ENCODE measurements at regions of chr4 and their contacts with region 1.

Region 1: DNA sequence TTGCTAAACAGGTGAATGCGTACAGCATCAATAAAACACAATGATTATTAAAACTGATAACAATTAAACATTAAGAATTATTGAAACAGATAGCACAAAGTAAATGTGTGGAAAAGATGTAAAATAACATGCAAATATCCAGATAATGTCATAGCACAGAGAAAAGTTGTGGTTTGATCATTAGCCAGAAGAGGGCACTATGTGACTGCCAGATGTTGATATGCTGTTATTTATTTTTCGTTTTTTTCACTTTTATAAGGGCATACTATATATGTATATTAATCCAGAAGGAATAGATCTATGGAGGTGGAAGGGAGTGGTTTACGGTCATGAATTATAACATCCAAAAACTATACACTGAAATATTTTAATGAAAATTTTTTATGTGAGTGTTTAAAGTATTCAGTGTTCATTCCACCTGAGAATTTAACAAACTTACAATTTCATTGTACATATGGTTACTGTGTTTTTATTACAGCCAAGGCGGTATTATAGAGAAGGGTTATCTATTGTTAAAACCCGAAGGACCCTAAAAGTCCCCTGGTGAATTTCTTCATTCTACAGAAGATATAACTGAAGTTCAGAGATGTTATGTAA is 211.9 kb upstream of the UGT8 start:
- DNase-seq: no peak
- H3K4me3 ChIP-seq: no peak overlapping the region
- H3K27ac ChIP-seq: no peak overlapping the region
- H3K27me3 ChIP-seq: peaks cover 0 to 4% (median 0%) of the 10 kb centered on the region in 45 donors
- CTCF ChIP-seq: peak; percentile 49 to 97 (median 80)

Region 2: GRCh38 chr4:113394730-113395530 is 991.8 kb before region 1 on chr4:
- intact Hi-C with region 1: loop called (anchors 5 kb)
- DNase-seq: peak in 3 of 10 donors; percentile 34 to 64 (median 61)
- H3K4me3 ChIP-seq: peak overlapping the region in 7 of 59 donors; percentile 2 to 27 (median 7)
- H3K27ac ChIP-seq: peak overlapping the region in 23 of 59 donors; percentile 4 to 67 (median 38)
- H3K27me3 ChIP-seq: no peaks in the 10 kb centered on the region
- CTCF ChIP-seq: peak; percentile 82 to 98 (median 94)

Region 3: DNA sequence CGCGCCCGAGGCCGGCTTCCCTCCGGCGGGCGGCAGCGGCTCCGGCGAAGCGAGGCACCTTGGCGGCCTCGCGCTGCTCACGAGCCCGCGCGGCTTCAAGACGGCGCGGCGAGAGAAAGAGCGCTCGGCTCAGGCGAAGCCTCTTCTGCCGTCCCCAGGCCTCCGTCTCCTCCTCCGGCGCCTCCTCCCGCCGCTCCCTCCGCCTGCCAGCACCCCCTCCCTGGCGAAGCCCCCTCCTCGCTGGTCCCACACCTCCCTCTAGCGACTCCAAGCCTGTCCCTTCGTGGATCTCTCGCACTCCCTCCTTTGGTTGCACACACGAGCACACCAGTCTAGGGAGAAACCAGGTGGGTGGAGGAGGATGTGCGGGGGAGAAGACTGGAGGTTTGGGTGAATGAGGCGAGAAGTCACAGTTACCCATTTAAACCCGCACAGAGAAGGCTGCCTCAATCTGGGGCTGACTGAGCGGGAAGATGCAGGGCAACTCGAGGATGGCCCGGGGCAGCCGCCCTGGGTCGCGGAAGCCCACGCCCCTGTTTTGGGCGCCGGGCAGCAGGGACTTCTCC is 625.0 kb before region 1 on chr4 and contains the start of gene CAMK2D:
- intact Hi-C with region 1: loop called in 1 of 2 experiments (anchors 10 kb)
- DNase-seq: peak; percentile 67 to 94 (median 86)
- H3K4me3 ChIP-seq: peak within 1 kb of the TSS; percentile 53 to 95 (median 85)
- H3K27ac ChIP-seq: peak within 1 kb of the TSS; percentile 86 to 100 (median 99)
- H3K27me3 ChIP-seq: no peaks in the 10 kb centered on the region
- CTCF ChIP-seq: peak in 54 of 56 donors; percentile 31 to 80 (median 65)
- total RNA-seq, gene CAMK2D: 46.8 to 134 (median 89.2) TPM

Region 4: GRCh38 chr4:114659386-114660008 is 272.8 kb after region 1 on chr4:
- intact Hi-C with region 1: loop called in 1 of 2 experiments (anchors 5 kb)
- DNase-seq: peak; percentile 55 to 91 (median 78)
- H3K4me3 ChIP-seq: peak overlapping the region in 34 of 59 donors; percentile 1 to 50 (median 23)
- H3K27ac ChIP-seq: peak overlapping the region in 57 of 59 donors; percentile 40 to 99 (median 84)
- H3K27me3 ChIP-seq: peaks cover 0 to 7% (median 0%) of the 10 kb centered on the region in 45 donors
- CTCF ChIP-seq: peak; percentile 72 to 96 (median 89)

Region 5: DNA sequence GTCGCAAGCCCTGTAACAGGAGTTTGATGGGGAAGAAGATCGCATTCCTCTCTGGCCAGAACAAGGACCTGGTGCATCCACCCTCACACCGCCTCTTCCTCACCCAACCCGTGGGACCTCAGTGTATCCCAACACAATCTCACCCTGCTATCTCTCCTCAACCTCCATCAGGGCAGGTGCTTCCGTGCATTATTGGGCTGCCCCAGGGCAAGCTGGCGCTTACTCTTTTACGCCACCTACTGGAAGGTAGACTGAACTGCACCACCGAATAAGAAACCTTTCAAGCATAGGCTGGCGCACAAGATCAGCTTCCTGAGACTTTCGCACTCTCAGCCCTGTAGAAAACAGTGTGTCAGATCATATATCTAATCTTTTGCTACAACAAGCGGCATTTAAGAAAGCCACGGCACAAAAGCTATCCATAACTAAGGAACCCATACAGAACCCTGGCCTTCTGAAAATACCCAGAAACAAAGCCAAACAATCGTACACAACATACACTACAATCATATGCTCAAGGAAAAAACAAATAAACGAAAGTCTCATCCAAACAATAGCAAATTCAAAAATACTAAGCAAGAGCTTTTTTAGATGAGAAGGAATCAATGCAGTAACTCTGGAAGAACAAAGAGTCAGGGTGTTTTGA is 421.1 kb after region 1 on chr4:
- intact Hi-C with region 1: loop called in 1 of 2 experiments (anchors 10 kb)
- DNase-seq: peak in 2 of 10 donors; percentile 26 to 42
- H3K4me3 ChIP-seq: no peak overlapping the region
- H3K27ac ChIP-seq: no peak overlapping the region
- H3K27me3 ChIP-seq: peaks cover 0 to 4% (median 0%) of the 10 kb centered on the region in 45 donors
- CTCF ChIP-seq: peak in 53 of 56 donors; percentile 36 to 74 (median 56)

Region 6: GRCh38 chr4:114890773-114891172 is 504.0 kb after region 1 on chr4:
- intact Hi-C with region 1: no loop called
- DNase-seq: no peak
- H3K4me3 ChIP-seq: no peak overlapping the region
- H3K27ac ChIP-seq: no peak overlapping the region
- H3K27me3 ChIP-seq: no peaks in the 10 kb centered on the region
- CTCF ChIP-seq: no peak